Upper lobe of right lung (tissue), 1 donor: ENCODE measurements at regions of chr2 and their contacts with region 1.

Region 1: GRCh38 chr2:30366199-30366691 is 80.8 kb upstream of the LCLAT1 start:
- DNase-seq: no peak
- ATAC-seq: no peak
- H3K4me3 ChIP-seq: no peak overlapping the region
- H3K27ac ChIP-seq: peak overlapping the region; percentile 26
- H3K4me1 ChIP-seq: peaks cover 34% of the 10 kb centered on the region
- H3K27me3 ChIP-seq: no peaks in the 10 kb centered on the region
- CTCF ChIP-seq: no peak

Region 2: GRCh38 chr2:30026087-30027055 is 339.9 kb before region 1 on chr2:
- intact Hi-C with region 1: no loop called
- DNase-seq: peak; percentile 67
- ATAC-seq: peak; percentile 62
- H3K4me3 ChIP-seq: no peak overlapping the region
- H3K27ac ChIP-seq: no peak overlapping the region
- H3K4me1 ChIP-seq: no peaks in the 10 kb centered on the region
- H3K27me3 ChIP-seq: no peaks in the 10 kb centered on the region
- CTCF ChIP-seq: peak; percentile 42

Region 3: DNA sequence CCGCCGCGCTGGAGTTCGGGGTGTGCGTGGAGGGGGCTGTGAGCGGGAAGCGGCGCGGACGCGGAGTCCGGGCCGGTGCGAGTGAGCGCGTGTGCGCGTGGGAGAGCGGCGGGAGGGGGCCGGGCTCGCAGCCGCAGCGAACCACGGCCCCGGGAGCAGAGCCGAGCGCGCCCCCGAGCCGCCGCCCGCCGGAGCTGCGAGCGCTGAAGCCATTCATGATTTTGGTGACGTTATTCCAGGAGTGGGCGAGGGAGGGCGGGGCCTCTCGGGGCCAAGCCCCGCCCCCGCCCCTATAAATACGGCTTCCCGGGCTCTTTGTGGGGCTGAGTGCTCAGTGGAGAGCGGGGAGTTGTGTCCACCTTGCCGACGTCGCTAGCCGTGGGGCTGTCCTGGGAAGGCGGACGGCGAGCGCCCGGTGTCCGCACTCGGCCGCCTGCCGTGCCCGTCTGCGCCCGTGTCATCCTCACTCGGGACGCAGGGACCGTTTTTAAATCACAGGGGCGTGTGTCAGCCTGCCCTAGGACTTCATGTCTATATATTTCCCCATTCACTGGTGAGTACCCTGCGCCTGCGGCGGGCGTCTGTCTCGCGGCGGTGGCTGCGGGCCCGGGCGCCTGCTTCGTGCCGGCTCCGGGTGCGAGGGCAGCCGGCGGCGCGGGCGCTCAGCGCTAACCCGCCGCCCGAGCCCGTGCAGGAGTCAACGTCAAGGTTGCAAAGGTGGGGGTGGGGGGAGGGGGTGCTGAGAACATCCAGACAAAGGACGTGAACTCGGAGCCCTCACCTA is 134.8 kb before region 1 on chr2 and contains the start of gene LBH:
- intact Hi-C with region 1: loop called (anchors 10 kb)
- DNase-seq: peak; percentile 89
- ATAC-seq: peak; percentile 85
- H3K4me3 ChIP-seq: peak within 1 kb of the TSS; percentile 73
- H3K27ac ChIP-seq: peak within 1 kb of the TSS; percentile 87
- H3K4me1 ChIP-seq: peaks cover 25% of the 10 kb centered on the region
- H3K27me3 ChIP-seq: no peaks in the 10 kb centered on the region
- CTCF ChIP-seq: no peak
- total RNA-seq, gene LBH: 272 TPM

Region 4: GRCh38 chr2:30545875-30546274 is 179.6 kb after region 1 on chr2:
- intact Hi-C with region 1: no loop called
- DNase-seq: no peak
- ATAC-seq: no peak
- H3K4me3 ChIP-seq: no peak overlapping the region
- H3K27ac ChIP-seq: no peak overlapping the region
- H3K4me1 ChIP-seq: peaks cover 11% of the 10 kb centered on the region
- H3K27me3 ChIP-seq: no peaks in the 10 kb centered on the region
- CTCF ChIP-seq: no peak

Region 5: GRCh38 chr2:30584116-30584515 is 217.9 kb after region 1 on chr2:
- intact Hi-C with region 1: no loop called
- DNase-seq: no peak
- ATAC-seq: no peak
- H3K4me3 ChIP-seq: no peak overlapping the region
- H3K27ac ChIP-seq: no peak overlapping the region
- H3K4me1 ChIP-seq: no peaks in the 10 kb centered on the region
- H3K27me3 ChIP-seq: no peaks in the 10 kb centered on the region
- CTCF ChIP-seq: no peak